ENCODE measurements at regions of chr2 and their contacts with region 1.

Region 1: GRCh38 chr2:11829947-11830707 is 83.7 kb downstream of the LPIN1 start:
- DNase-seq: peak; percentile 76
- ATAC-seq: peak; percentile 90
- H3K4me3 Mint-ChIP-seq: peak overlapping the region; percentile 51
- H3K27ac Mint-ChIP-seq: peak overlapping the region; percentile 97
- H3K4me1 Mint-ChIP-seq: peaks cover 48% of the 10 kb centered on the region
- H3K27me3 Mint-ChIP-seq: no peaks in the 10 kb centered on the region
- CTCF ChIP-seq: no peak

Region 2: GRCh38 chr2:11863513-11864328 is 33.6 kb after region 1 on chr2:
- CTCF ChIA-PET with region 1: interaction called, 11 read pairs
- POLR2A ChIA-PET with region 1: no interaction called
- DNase-seq: peak; percentile 86
- ATAC-seq: peak; percentile 94
- H3K4me3 Mint-ChIP-seq: no peak overlapping the region
- H3K27ac Mint-ChIP-seq: no peak overlapping the region; the same call in 1 of the 2 replicates
- H3K4me1 Mint-ChIP-seq: peaks cover 28% of the 10 kb centered on the region
- H3K27me3 Mint-ChIP-seq: no peaks in the 10 kb centered on the region; the same call in 1 of the 2 replicates
- CTCF ChIP-seq: peak; percentile 92

Region 3: DNA sequence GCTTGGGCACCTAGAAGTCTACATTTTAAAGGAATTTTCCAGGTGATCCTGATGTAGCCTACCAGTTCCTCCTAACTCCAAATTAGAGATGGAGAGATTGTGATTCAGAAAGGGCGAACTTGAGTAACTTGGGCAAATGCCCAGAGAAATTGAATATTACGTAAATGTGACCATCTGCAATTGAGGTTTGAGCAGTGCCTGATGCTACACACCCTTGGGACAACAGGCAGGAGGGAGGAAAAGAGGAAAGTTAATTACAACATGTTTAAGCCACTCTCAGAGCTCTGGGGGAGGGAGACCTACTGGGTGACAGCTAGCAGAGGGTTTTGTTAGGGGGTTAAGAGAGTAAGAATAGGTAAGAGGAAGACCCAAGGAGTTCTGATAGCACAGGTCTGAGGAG is 125.2 kb after region 1 on chr2:
- CTCF ChIA-PET with region 1: interaction called, 17 read pairs
- POLR2A ChIA-PET with region 1: no interaction called
- DNase-seq: no peak
- ATAC-seq: no peak
- H3K4me3 Mint-ChIP-seq: no peak overlapping the region
- H3K27ac Mint-ChIP-seq: no peak overlapping the region
- H3K4me1 Mint-ChIP-seq: peaks cover 6% of the 10 kb centered on the region
- H3K27me3 Mint-ChIP-seq: no peaks in the 10 kb centered on the region; the same call in 1 of the 2 replicates
- CTCF ChIP-seq: no peak

Region 4: GRCh38 chr2:12017499-12018157 is 187.5 kb after region 1 on chr2:
- CTCF ChIA-PET with region 1: no interaction called
- POLR2A ChIA-PET with region 1: no interaction called
- DNase-seq: no peak
- ATAC-seq: no peak
- H3K4me3 Mint-ChIP-seq: no peak overlapping the region
- H3K27ac Mint-ChIP-seq: no peak overlapping the region
- H3K4me1 Mint-ChIP-seq: 0 out of 2 replicates have a peak, but pooled peaks cover 7% of the 10 kb centered on the region
- H3K27me3 Mint-ChIP-seq: peaks cover 10% of the 10 kb centered on the region
- CTCF ChIP-seq: no peak

Region 5: DNA sequence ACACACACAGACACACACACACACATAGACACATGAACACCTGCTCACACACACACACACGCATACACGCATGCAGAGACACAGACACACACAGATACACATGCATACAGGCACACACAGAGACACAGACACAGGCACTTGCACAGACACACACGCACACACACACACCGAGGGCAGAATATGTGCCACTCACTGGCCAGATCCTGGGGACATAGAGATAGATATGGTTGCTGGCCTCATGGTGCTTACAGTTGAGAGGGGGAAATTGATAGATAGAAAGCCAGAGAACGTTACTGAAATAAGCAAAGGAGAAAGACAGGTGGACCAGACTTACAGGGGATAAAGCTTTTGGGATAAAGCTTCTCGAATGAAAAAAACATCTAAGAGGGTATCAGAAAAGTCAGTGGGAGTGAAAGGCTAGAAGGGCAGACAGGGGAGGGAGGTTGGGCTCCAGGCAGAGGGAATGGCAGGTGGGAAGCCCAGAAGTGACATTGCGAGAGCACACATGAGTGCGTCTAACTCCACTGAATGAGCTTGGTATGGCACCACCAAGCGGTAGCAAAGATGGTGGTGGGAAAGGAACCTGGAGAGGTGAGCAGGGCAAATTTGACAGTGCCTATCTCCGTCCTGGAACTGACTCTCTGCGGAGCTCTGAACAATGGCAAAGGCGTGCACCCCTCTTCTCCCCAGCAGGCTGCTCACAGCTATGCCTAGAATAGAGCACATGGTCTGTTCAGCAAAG is 496.5 kb after region 1 on chr2:
- CTCF ChIA-PET with region 1: interaction called, 13 read pairs
- POLR2A ChIA-PET with region 1: no interaction called
- DNase-seq: peak; percentile 38
- ATAC-seq: peak; percentile 98
- H3K4me3 Mint-ChIP-seq: no peak overlapping the region
- H3K27ac Mint-ChIP-seq: no peak overlapping the region
- H3K4me1 Mint-ChIP-seq: peaks cover 7% of the 10 kb centered on the region; the same call in 1 of the 2 replicates
- H3K27me3 Mint-ChIP-seq: no peaks in the 10 kb centered on the region
- CTCF ChIP-seq: no peak

Region 6: GRCh38 chr2:13006829-13007717 is 1176.9 kb after region 1 on chr2:
- CTCF ChIA-PET with region 1: interaction called, 16 read pairs
- POLR2A ChIA-PET with region 1: no interaction called
- DNase-seq: peak; percentile 70
- ATAC-seq: peak; percentile 98
- H3K4me3 Mint-ChIP-seq: no peak overlapping the region
- H3K27ac Mint-ChIP-seq: no peak overlapping the region
- H3K4me1 Mint-ChIP-seq: peaks cover 19% of the 10 kb centered on the region
- H3K27me3 Mint-ChIP-seq: no peaks in the 10 kb centered on the region
- CTCF ChIP-seq: peak; percentile 85

Measured in WTC11 (cell line).